ENCODE measurements at regions of chr11 and their contacts with region 1.

Region 1: GRCh38 chr11:6022956-6023355 is 7.6 kb downstream of the OR56A1 start:
- DNase-seq: peak; percentile 7
- H3K4me3 ChIP-seq: no peak overlapping the region
- H3K27ac ChIP-seq: no peak overlapping the region
- H3K4me1 ChIP-seq: no peaks in the 10 kb centered on the region
- H3K27me3 ChIP-seq: no peaks in the 10 kb centered on the region
- CTCF ChIP-seq: peak in 3 of 4 experiments; percentile 29 to 59 (median 45)
- POLR2A ChIP-seq: no peak

Region 2: GRCh38 chr11:5955586-5955985 is 67.4 kb before region 1 on chr11:
- intact Hi-C with region 1: no loop called
- DNase-seq: no peak
- H3K4me3 ChIP-seq: no peak overlapping the region
- H3K27ac ChIP-seq: no peak overlapping the region
- H3K4me1 ChIP-seq: no peaks in the 10 kb centered on the region
- H3K27me3 ChIP-seq: no peaks in the 10 kb centered on the region
- CTCF ChIP-seq: no peak
- POLR2A ChIP-seq: no peak

Region 3: DNA sequence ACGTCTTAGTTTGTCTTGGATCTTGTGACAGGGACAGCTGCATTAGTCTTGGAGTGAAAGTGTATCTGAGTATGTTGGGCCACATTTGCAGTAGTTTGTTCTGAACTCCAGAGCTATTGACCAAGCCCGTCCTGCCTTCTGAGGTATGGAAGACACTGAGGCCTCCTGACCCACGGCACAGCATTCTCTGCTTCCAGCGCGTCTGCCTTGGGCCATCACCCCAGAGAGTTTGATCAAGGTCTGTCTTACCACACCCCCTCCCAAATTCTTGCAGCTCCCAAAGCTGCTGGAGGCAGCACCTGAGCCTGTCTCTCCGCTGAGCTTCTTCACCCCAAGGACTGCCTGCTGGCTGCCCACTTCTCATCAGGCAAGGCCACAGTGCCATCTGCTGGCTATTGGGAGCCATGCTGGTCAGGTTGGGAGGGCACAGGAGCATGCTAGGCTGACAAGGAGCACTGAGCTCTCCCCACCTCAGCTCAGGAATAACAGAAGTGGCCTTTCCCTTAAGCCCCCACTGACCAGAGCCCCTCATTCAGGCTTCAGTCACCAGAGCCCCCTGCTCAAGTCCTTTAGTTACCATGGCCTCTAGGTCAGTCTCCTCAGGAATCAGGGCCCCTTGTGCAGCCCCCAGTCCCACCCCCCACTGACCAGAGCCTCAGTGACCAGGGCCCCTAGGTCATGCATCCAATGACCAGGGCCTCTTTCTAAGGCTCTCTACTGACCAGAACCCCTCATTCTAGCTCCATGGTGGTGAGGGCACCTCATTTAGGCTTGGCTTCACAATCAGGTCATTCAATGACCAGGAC is 340.1 kb after region 1 on chr11:
- intact Hi-C with region 1: loop called (anchors 5 kb)
- DNase-seq: peak; percentile 67
- H3K4me3 ChIP-seq: no peak overlapping the region
- H3K27ac ChIP-seq: no peak overlapping the region
- H3K4me1 ChIP-seq: no peaks in the 10 kb centered on the region
- H3K27me3 ChIP-seq: no peaks in the 10 kb centered on the region
- CTCF ChIP-seq: peak; percentile 43 to 82 (median 68)
- POLR2A ChIP-seq: no peak

Region 4: GRCh38 chr11:6402561-6402981 is 379.6 kb after region 1 on chr11:
- intact Hi-C with region 1: no loop called
- DNase-seq: no peak
- H3K4me3 ChIP-seq: no peak overlapping the region
- H3K27ac ChIP-seq: no peak overlapping the region
- H3K4me1 ChIP-seq: no peaks in the 10 kb centered on the region
- H3K27me3 ChIP-seq: no peaks in the 10 kb centered on the region
- CTCF ChIP-seq: no peak
- POLR2A ChIP-seq: no peak

Region 5: DNA sequence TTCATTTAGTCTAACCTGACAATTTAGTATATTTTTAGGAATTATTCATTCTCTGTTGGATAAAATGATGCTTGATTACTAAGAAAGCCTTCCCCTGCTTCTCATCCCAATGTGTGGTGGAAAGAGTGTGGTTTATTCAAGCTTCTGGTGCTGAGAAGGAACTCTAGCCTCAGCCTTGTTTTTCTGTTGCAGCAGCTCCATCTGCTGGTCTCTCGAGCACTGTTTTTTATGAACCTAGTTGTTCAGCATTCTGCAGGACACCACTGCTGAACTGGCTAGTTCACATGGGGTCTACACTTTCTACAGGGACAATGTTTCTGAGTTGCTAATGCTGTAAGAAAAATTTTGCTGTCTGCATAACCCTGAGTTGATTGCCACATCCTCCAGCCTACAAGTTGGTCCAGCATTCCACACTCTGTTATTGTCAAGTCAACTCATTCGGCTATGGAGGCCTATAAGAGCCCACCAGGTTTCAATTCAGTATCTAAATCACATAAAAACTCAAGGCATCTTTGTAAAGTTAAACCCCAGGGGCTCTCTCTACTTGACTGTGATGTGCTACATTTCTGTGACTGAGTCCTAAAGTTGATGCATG is 734.5 kb after region 1 on chr11:
- intact Hi-C with region 1: no loop called
- DNase-seq: peak; percentile 20
- H3K4me3 ChIP-seq: no peak overlapping the region
- H3K27ac ChIP-seq: no peak overlapping the region
- H3K4me1 ChIP-seq: no peaks in the 10 kb centered on the region
- H3K27me3 ChIP-seq: no peaks in the 10 kb centered on the region
- CTCF ChIP-seq: peak in 3 of 4 experiments; percentile 41 to 53 (median 46)
- POLR2A ChIP-seq: no peak

Measured in prostate gland (tissue), 2 donors.